ENCODE measurements at regions of chr2 and their contacts with region 1.

Region 1: DNA sequence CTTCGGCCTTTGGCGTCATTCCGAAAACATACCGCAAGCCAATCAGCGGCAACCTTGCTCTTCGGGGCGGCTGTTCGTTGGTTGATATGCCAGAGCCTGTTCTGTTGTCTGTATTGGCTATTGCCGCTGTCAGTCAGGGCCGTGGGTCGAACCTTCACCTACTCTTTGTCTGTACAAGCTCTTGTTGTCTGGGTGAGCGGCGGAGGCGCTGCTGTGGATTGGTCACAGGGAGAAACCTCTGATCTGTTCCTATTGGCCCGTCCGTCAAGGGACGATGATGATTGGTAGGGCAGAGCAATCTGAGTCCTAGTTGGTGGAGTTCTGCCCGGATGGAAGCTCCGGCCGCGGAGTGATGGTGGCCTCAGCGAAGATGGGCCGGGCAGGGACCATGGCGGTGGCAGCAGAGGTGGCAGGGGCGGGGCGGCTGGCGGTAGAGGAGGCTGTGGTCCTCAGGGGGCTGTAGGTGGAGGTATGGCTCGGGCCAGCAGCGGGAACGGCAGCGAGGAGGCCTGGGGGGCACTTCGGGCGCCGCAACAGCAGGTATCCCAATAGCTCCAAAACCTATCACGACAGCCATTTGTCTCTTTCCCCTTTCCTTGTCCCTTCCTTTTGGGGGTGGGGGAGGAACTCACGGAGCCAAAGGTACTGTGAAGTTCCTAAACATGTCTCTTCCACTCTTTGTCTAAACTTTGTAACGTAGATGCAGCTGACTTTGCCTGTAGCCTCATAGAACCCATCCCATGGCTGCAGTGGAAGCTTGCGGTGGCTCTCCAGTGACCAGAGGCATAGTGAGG is at the start of gene WBP1:
- DNase-seq: peak; percentile 99 to 100 (median 100)
- H3K4me3 ChIP-seq: peak within 1 kb of the TSS; percentile 70 to 93
- H3K4me3 Mint-ChIP-seq: peak within 1 kb of the TSS; percentile 95 to 99 (median 98)
- H3K27ac ChIP-seq: peak within 1 kb of the TSS; percentile 100
- H3K27ac Mint-ChIP-seq: peak within 1 kb of the TSS; percentile 92 to 100 (median 99)
- H3K4me1 ChIP-seq: peaks cover 45% of the 10 kb centered on the region
- H3K4me1 Mint-ChIP-seq: peaks cover 40 to 68% (median 55%) of the 10 kb centered on the region in 4 donors
- H3K27me3 ChIP-seq: no peaks in the 10 kb centered on the region
- H3K27me3 Mint-ChIP-seq: no peaks in the 10 kb centered on the region
- total RNA-seq, gene WBP1: 108 to 109 TPM

Region 2: DNA sequence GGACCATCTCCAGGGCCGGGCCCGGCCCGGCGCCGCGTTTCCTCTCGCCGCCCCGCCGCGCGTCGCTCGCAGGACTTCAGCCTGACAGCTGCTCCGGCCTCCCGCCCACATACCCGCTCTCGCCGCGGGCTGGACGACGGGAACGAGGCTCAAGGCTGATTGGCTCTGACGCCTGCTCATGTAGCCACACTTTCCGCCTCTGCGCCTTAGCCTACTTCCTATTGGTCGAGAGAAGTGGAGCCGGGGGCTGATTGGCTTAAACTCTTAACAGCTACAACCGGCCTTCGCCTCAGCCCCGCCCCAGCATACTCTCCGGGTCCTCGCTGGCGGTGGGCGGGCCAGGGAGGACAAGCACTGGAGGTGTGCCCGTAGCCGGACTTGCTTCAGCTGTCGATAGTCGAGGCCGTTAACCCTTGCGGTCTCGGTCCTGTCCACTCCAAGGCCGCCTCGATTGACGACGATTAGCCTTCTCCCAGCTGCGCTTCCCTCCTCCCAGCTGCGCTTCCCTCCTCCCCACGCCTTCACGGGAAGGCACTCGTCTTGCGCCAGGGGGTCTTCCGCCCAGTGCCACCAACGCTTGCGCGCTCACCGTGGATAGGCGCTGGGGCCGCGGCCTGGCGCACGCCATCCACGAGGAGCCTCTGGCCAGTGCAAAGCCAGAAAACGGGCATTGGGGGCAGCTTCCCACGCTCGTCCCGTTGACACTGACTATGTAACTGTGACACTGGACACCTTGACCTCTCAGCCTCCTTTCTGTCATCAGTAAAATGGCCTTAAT is 1225.0 kb before region 1 on chr2 and contains the start of gene PRADC1:
- CTCF ChIA-PET with region 1: no interaction called
- POLR2A ChIA-PET with region 1: interaction called, 4 read pairs
- intact Hi-C with region 1: loop called (anchors 2 kb)
- DNase-seq: peak; percentile 92 to 97 (median 94)
- H3K4me3 ChIP-seq: peak within 1 kb of the TSS; percentile 86 to 99
- H3K4me3 Mint-ChIP-seq: peak within 1 kb of the TSS; percentile 91 to 99 (median 98)
- H3K27ac ChIP-seq: peak within 1 kb of the TSS; percentile 91
- H3K27ac Mint-ChIP-seq: peak within 1 kb of the TSS; percentile 83 to 97 (median 91)
- H3K4me1 ChIP-seq: peaks cover 33% of the 10 kb centered on the region
- H3K4me1 Mint-ChIP-seq: peaks cover 26 to 56% (median 34%) of the 10 kb centered on the region in 4 donors
- H3K27me3 ChIP-seq: no peaks in the 10 kb centered on the region
- H3K27me3 Mint-ChIP-seq: no peaks in the 10 kb centered on the region
- total RNA-seq, gene PRADC1: 7.0 to 7.4 TPM

Region 3: DNA sequence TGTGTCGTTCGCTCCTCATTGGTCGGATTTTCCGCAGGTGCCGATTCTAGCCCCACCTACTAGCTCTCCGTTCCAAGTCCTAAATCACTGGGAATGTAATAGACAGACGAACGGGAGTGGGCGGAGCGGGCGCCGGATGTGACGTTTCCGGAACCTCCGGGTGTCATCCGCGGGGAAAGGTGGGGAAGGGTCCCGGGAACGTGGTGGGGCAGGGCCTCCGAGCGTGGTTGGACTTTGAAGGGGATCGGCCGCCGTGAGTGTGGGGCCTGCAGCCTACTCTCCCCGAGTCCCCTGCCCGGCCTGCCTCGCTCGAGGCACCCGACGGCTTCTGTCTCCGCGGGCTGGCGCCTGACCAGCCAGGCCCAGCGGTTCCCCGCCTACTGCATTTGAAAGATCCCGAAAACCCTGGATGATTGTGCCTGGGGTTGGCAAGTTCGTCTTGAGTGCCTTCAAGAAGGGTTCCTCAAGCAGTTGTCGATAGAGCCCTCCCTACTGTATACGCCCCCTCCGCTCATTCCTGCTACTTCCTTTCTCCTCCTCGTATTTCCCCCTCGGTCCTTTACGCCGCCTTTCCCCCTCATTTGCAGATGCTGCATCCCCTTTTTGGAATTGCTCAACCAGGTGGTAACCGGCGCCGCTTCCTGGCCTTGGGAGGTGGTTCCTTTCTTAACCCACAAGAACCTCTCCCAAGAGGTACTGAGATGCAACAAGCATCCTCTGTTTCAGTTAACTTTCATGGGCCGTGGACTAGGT is 629.3 kb before region 1 on chr2 and contains the start of gene STAMBP:
- CTCF ChIA-PET with region 1: no interaction called
- POLR2A ChIA-PET with region 1: interaction called, 4 read pairs
- intact Hi-C with region 1: loop called (anchors 1 kb)
- DNase-seq: peak; percentile 87 to 95 (median 91)
- H3K4me3 ChIP-seq: peak within 1 kb of the TSS; percentile 64 to 81
- H3K4me3 Mint-ChIP-seq: peak within 1 kb of the TSS; percentile 91 to 99 (median 96)
- H3K27ac ChIP-seq: peak within 1 kb of the TSS; percentile 92
- H3K27ac Mint-ChIP-seq: peak within 1 kb of the TSS; percentile 94 to 100 (median 98)
- H3K4me1 ChIP-seq: peaks cover 45% of the 10 kb centered on the region
- H3K4me1 Mint-ChIP-seq: peaks cover 34 to 49% (median 40%) of the 10 kb centered on the region in 4 donors
- H3K27me3 ChIP-seq: no peaks in the 10 kb centered on the region
- H3K27me3 Mint-ChIP-seq: no peaks in the 10 kb centered on the region
- total RNA-seq, gene STAMBP: 34.8 to 37.3 TPM

Region 4: DNA sequence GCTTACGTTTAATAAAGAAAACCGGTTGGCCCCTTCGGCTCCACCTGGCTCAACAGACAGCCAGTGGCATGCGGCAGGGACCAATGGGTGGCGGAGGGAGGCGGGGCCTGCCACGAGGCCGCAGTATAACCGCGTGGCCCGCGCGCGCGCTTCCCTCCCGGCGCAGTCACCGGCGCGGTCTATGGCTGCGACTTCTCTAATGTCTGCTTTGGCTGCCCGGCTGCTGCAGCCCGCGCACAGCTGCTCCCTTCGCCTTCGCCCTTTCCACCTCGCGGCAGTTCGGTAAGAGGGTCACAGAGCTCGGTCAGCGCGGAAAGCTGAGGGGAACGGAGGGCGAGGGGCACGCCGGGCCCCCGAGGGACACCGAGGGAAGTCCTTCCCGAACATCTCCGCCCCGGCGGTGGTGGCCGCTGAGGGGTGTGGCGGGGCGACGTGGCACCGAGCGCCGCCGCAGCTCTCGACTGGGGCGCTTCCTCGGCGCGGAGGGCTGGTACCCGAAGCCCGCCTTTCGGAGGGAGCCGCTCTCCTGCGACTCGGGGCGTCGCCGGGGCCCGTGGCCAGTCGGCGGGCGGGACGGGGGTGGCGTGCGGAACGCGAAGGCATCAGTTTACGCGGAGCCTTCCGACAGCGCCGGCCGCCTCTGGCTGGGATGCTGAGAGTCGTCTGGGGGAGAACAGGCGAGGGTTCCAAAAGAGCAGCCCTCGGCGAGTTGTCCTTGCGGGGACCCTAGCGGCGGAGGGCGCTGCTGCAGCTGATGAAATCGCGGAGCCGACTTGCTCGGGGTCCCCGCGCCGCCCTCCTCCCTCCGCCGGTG is 259.7 kb before region 1 on chr2 and contains the start of gene MTHFD2:
- CTCF ChIA-PET with region 1: no interaction called
- POLR2A ChIA-PET with region 1: interaction called, 4 read pairs
- intact Hi-C with region 1: loop called (anchors 1 kb)
- DNase-seq: peak; percentile 84 to 89 (median 86)
- H3K4me3 ChIP-seq: peak within 1 kb of the TSS; percentile 85 to 91
- H3K4me3 Mint-ChIP-seq: peak within 1 kb of the TSS; percentile 94 to 100 (median 98)
- H3K27ac ChIP-seq: peak within 1 kb of the TSS; percentile 86
- H3K27ac Mint-ChIP-seq: peak within 1 kb of the TSS; percentile 89 to 100 (median 99)
- H3K4me1 ChIP-seq: peaks cover 35% of the 10 kb centered on the region
- H3K4me1 Mint-ChIP-seq: peaks cover 20 to 41% (median 31%) of the 10 kb centered on the region in 4 donors
- H3K27me3 ChIP-seq: no peaks in the 10 kb centered on the region
- H3K27me3 Mint-ChIP-seq: no peaks in the 10 kb centered on the region
- total RNA-seq, gene MTHFD2: 23.8 to 25.0 TPM

Region 5: DNA sequence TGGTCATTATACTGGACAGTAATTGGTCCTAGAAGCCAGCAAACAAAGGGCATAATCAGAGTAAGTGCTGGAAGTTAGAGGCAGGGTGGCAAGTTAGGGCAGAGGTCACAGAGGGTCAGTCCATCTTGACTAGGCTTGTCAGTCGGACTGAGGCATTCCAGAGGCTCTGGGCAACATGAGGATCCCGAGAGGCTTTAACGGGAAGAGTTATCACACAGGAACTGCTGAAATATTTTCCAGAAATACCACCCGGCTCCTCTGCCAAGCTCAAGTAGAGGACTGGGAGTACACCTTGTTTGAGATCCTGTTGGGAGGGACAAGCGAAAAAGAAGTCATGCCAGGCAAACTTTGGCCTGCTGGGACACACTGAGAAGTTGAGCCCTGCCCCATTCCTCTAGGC is 50.6 kb before region 1 on chr2:
- CTCF ChIA-PET with region 1: no interaction called
- POLR2A ChIA-PET with region 1: no interaction called
- intact Hi-C with region 1: no loop called
- DNase-seq: no peak
- H3K4me3 ChIP-seq: no peak overlapping the region
- H3K4me3 Mint-ChIP-seq: no peak overlapping the region
- H3K27ac ChIP-seq: no peak overlapping the region
- H3K27ac Mint-ChIP-seq: no peak overlapping the region
- H3K4me1 ChIP-seq: no peaks in the 10 kb centered on the region
- H3K4me1 Mint-ChIP-seq: peaks cover 0 to 1% (median 0%) of the 10 kb centered on the region in 4 donors
- H3K27me3 ChIP-seq: no peaks in the 10 kb centered on the region
- H3K27me3 Mint-ChIP-seq: peaks cover 9 to 16% of the 10 kb centered on the region in 2 donors

Region 6: DNA sequence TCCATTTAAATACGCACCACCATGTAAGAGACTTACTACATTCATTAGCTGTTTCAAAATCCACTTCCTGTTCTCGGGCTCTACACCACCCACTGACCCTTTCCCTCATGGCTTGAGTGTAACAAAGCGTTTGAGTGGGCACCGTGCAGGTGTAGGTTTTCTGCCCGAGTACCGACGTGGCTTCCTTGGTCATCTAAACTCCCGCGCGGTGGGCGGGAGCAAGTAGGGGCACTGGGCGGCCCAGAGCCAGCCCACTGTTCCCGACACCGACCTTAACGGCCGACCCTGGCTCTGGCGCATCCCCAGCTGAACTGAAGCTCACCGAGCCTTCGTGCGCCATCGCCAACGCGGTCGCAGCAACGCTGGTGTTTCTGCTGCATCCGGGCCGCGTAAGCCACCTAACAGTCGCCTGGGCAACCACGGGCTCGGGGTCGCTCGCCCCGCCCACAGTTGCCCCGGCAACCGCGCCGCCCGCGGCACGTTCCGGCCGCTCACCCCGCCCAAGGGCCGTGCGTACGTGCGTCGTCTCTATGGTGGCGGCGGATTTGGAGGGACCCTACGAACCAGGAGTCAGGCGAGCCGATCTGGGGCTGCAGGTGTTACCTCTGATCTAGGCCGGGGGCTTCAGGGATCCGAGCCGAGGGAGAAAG is 37.0 kb before region 1 on chr2 and contains the starts of genes C2orf81 and WDR54:
- CTCF ChIA-PET with region 1: interaction called, 5 read pairs
- POLR2A ChIA-PET with region 1: interaction called, 72 read pairs
- intact Hi-C with region 1: loop called (anchors 1 kb)
- DNase-seq: peak; percentile 91 to 96 (median 95)
- H3K4me3 ChIP-seq: peak within 1 kb of the TSS; percentile 76 to 88
- H3K4me3 Mint-ChIP-seq: peak within 1 kb of the TSS; percentile 96 to 100 (median 98)
- H3K27ac ChIP-seq: peak within 1 kb of the TSS; percentile 93
- H3K27ac Mint-ChIP-seq: peak within 1 kb of the TSS; percentile 88 to 100 (median 99)
- H3K4me1 ChIP-seq: peaks cover 11% of the 10 kb centered on the region
- H3K4me1 Mint-ChIP-seq: peaks cover 12 to 30% (median 21%) of the 10 kb centered on the region in 4 donors
- H3K27me3 ChIP-seq: no peaks in the 10 kb centered on the region
- H3K27me3 Mint-ChIP-seq: no peaks in the 10 kb centered on the region
- total RNA-seq, gene C2orf81: 5.3 to 7.5 TPM
- total RNA-seq, gene WDR54: 36.3 to 41.0 TPM

Region 7: GRCh38 chr2:74498500-74499266 is 40.4 kb after region 1 on chr2:
- CTCF ChIA-PET with region 1: interaction called, 4 read pairs
- POLR2A ChIA-PET with region 1: interaction called, 14 read pairs
- intact Hi-C with region 1: no loop called
- DNase-seq: peak in 3 of 5 donors; percentile 14 to 29 (median 19)
- H3K4me3 ChIP-seq: peak overlapping the region; percentile 52 to 64
- H3K4me3 Mint-ChIP-seq: peak overlapping the region; percentile 78 to 96 (median 89)
- H3K27ac ChIP-seq: no peak overlapping the region
- H3K27ac Mint-ChIP-seq: peak overlapping the region in 4 of 7 donors; percentile 32 to 63 (median 43)
- H3K4me1 ChIP-seq: peaks cover 36% of the 10 kb centered on the region
- H3K4me1 Mint-ChIP-seq: peaks cover 10 to 56% (median 34%) of the 10 kb centered on the region in 4 donors
- H3K27me3 ChIP-seq: peaks cover 31% of the 10 kb centered on the region
- H3K27me3 Mint-ChIP-seq: peaks cover 15 to 45% of the 10 kb centered on the region in 2 donors

Region 8: DNA sequence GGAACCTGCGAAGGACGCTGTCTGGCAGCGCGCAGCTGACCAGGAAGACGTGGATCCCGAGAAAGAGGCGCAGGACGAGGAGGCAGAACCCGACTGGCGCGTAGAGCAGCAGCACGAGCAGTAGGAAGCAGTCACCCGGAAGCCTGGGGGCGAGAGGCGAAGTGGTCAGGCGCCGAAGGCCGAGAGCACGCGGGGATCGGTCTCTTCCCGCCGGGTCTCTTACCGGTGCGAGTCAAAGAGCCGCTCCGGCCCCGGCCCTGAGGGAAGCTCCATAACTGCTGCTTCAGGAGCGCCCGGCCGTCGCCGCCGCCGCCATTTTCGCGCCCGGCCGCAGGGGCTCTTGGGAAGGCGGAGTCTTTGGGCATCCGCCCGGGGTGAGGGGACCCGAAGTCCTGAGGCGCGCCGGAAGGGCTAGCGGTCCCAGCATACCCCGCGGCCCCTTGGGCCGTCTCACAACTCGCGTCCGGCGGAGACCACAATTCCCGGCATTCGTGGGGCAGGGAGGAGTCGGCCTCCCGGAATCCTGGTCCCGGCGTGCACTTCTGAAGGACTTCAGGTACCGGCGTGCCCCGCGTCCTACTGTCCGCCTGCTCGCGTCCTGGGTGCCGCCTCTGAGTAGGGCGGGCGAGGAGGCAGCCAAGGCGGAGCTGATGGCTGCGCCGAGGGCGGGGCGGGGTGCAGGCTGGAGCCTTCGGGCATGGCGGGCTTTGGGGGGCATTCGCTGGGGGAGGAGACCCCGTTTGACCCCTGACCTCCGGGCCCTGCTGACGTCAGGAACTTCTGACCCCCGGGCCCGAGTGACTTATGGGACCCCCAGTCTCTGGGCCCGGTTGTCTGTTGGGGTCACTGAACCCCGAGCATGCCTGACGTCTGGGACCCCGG is 71.3 kb after region 1 on chr2 and contains the starts of genes AUP1 and HTRA2:
- CTCF ChIA-PET with region 1: interaction called, 6 read pairs
- POLR2A ChIA-PET with region 1: interaction called, 74 read pairs
- intact Hi-C with region 1: loop called (anchors 1 kb)
- DNase-seq: peak; percentile 83 to 88 (median 86)
- H3K4me3 ChIP-seq: peak within 1 kb of the TSS; percentile 89 to 100
- H3K4me3 Mint-ChIP-seq: peak within 1 kb of the TSS; percentile 92 to 96 (median 94)
- H3K27ac ChIP-seq: peak within 1 kb of the TSS; percentile 84
- H3K27ac Mint-ChIP-seq: peak within 1 kb of the TSS; percentile 87 to 97 (median 94)
- H3K4me1 ChIP-seq: peaks cover 31% of the 10 kb centered on the region
- H3K4me1 Mint-ChIP-seq: peaks cover 19 to 50% (median 40%) of the 10 kb centered on the region in 4 donors
- H3K27me3 ChIP-seq: no peaks in the 10 kb centered on the region
- H3K27me3 Mint-ChIP-seq: no peaks in the 10 kb centered on the region
- total RNA-seq, gene AUP1: 153 to 158 TPM
- total RNA-seq, gene HTRA2: 39.8 to 41.1 TPM

Measured in CD4-positive, alpha-beta memory T cell (primary cell).